Heart right ventricle (tissue), 16 donors: ENCODE measurements at regions of chr20 and their contacts with region 1.

Region 1: DNA sequence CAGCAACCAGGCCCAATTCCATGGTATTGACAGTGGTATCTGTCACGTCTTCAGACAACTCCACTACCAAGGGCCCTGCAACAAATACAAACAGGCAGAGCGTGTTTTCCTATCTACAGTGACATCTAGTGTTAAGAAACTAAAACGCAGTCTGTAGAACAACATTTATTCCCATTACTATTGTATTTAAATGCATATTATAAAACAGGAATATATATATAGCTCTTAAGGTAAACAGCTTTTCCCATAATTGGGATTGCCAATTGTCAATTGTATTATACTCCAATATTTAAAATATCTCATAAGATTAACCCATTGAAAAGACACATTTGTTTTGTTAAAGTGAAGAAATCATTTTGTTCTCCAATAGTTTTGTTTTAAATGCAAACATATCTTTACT is 97.2 kb downstream of the KIF16B start:
- DNase-seq: no peak
- ATAC-seq: peak in 7 of 8 donors; percentile 57 to 81 (median 65)
- H3K4me3 ChIP-seq: no peak overlapping the region
- H3K27ac ChIP-seq: no peak overlapping the region
- H3K4me1 ChIP-seq: peaks cover 0 to 32% (median 8%) of the 10 kb centered on the region in 9 donors
- H3K27me3 ChIP-seq: no peaks in the 10 kb centered on the region
- CTCF ChIP-seq: peak; percentile 58 to 80 (median 72)

Region 2: DNA sequence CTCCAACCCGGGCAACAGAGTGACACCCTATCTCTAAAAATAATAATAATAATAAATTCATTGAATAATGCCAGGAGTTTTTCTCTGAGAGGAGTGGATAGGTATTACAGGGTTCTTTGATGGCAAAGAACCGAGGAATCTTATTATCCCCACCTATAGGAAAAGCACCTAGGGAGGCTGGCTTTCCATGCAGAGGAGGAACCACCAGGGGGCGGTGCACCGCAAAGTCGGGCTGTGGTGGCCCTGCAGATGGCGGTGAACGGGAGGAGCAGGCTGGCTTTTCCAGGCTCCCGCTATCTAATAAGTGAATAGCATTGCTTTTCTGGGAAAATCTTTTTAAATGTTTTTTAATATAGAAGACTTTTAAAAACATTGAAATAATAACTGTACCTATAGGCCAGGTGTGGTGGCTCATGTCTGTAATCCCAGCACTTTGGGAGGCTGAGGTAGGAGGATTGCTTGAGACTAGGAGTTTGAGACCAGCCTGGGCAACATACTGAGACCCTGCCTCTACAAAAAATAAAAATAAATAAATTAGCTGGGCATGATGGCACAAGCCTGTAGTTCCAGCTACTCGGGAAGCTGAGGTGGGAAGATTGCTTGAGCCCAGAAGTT is 766.9 kb before region 1 on chr20:
- intact Hi-C with region 1: loop called in 4 of 10 experiments (anchors 5 to 10 kb)
- DNase-seq: peak; percentile 8 to 49
- ATAC-seq: no peak
- H3K4me3 ChIP-seq: no peak overlapping the region
- H3K27ac ChIP-seq: no peak overlapping the region
- H3K4me1 ChIP-seq: no peaks in the 10 kb centered on the region
- H3K27me3 ChIP-seq: peaks cover 0 to 4% (median 0%) of the 10 kb centered on the region in 7 donors
- CTCF ChIP-seq: peak in 7 of 9 donors; percentile 47 to 62 (median 50)

Region 3: DNA sequence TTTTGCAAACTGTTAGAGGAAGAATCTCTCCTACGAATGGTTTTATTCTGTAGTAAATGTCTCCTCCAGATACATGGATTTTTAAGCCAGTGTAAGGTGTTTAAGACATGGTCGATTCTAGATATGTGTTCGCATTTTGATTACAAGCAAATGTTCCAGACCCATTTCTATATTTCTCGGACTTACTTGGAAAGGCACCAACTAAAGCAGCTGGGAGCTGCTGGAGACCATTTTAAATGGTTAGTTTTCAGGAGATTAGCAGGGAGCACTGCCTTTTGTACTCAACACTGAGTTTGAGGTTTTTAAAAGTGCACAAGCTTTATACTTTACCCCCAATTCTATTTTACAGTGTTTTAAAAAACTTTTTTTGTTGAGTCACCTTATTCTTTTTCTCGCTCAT is 759.8 kb before region 1 on chr20:
- intact Hi-C with region 1: loop called in 1 of 10 experiments (anchors 10 kb)
- DNase-seq: no peak
- ATAC-seq: no peak
- H3K4me3 ChIP-seq: no peak overlapping the region
- H3K27ac ChIP-seq: no peak overlapping the region
- H3K4me1 ChIP-seq: no peaks in the 10 kb centered on the region
- H3K27me3 ChIP-seq: peaks cover 0 to under 1% (median 0%) of the 10 kb centered on the region in 7 donors
- CTCF ChIP-seq: no peak

Region 4: DNA sequence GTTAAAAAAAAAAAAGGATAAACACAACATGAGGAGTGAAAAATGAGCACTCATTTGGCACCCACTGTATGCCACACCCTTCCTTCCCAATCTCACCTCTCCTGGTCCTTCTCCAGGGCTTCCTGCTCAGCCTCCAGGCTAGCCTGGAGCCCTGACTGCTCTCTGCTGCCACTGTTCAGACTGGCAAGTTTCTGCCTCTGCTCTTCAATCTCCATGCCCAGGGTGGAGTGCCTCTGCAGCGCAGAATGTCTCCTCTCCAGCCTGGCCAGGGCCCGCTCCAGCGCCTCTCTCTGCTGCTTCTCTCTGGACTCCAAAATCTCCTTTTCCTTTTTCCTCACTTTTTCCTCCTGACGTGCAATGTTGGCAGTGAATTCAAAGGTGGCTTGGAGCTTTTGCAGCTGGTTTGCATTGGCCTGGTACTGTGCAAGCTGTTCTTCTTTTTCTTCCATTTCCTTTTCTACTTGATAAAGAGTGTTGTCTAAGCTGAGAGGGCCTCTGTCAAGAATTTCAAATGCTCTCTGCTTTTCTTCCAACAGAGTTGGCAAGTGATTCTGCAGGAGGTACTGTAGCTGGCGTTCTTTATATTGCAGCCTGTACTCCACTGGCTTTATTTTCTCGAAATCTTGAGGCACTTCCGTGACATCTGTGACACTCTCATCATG is 97.2 kb before region 1 on chr20:
- intact Hi-C with region 1: no loop called
- DNase-seq: no peak
- ATAC-seq: no peak
- H3K4me3 ChIP-seq: no peak overlapping the region
- H3K27ac ChIP-seq: no peak overlapping the region
- H3K4me1 ChIP-seq: no peaks in the 10 kb centered on the region
- H3K27me3 ChIP-seq: no peaks in the 10 kb centered on the region
- CTCF ChIP-seq: no peak

Region 5: DNA sequence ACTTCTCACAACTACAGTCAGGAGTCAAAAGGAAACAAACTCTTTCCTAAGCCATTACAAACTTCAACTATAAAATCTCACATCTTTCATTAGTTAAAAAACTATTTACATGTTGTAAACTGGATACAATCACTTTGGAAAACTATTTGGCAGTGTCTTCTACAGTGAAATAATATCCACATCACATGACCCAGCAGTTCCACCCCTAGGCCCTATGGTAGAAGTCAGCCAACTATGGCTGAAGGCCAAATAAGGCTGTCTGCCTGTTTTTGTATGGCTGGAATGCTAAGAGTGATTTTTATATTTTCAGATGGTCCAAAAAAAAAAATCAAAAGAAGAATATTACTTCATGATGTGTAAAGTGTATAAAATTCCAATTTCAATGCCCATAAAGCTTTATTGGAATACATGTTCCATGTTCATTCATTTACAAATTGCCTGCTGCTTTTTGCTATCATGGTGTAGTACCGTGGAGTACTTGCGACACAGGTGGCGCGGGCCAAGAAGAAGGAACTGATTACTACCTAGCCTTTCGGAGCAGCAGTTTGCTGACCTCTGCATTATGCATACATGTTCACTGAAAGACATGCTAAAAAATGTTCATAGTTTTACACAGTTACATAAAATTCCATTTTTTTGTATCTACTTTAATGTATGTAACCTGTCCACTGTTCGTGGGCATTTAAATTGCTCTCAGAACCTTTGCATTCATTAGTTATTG is 31.8 kb before region 1 on chr20:
- intact Hi-C with region 1: no loop called
- DNase-seq: no peak
- ATAC-seq: peak in 6 of 8 donors; percentile 47 to 79 (median 61)
- H3K4me3 ChIP-seq: no peak overlapping the region
- H3K27ac ChIP-seq: no peak overlapping the region
- H3K4me1 ChIP-seq: peaks cover 0 to 20% (median 11%) of the 10 kb centered on the region in 9 donors
- H3K27me3 ChIP-seq: no peaks in the 10 kb centered on the region
- CTCF ChIP-seq: no peak